Natural killer cell (primary cell): ENCODE measurements at regions of chr5 and their contacts with region 1.

Region 1: DNA sequence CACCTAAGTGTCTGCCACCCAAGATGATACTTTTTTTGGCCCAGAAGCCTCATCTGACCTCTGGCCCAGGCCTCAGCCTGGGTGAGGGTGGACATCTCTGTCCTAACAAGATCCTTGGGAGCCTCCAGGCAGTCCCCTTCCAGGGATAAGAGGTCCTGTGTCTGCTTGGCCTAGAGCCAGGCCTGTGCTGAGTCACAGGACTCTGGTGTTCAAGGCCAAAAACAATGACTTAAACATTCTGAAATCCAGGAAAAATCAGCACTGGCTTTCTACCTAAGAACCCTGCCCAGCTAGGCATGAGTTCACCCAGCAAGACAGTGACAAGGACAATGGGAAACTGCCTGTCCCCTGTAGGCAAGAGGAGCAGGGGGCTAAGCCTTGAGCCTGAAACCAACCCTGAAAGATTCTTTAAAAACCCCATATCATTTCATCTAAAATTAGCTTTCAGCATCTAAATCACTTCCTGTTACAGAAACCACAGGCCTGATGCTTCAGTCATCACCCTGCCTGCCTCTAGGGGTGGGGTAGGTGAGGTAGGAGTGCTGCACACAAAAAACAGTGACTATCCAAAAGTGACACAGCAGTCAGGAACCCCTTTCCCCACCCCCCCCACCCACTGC is 29.9 kb downstream of the CSF2 start:
- DNase-seq: peak; percentile 69 to 85
- ATAC-seq: peak; percentile 65 to 88 (median 75)
- H3K4me3 ChIP-seq: no peak overlapping the region
- H3K4me3 Mint-ChIP-seq: peak overlapping the region; percentile 71
- H3K27ac ChIP-seq: peak overlapping the region; percentile 94
- H3K27ac Mint-ChIP-seq: peak overlapping the region; percentile 92 to 94
- H3K4me1 ChIP-seq: peaks cover 66% of the 10 kb centered on the region
- H3K4me1 Mint-ChIP-seq: peaks cover 71 to 74% of the 10 kb centered on the region in 2 donors
- H3K27me3 ChIP-seq: no peaks in the 10 kb centered on the region
- H3K27me3 Mint-ChIP-seq: no peaks in the 10 kb centered on the region
- CTCF ChIP-seq: no peak

Region 2: GRCh38 chr5:132019857-132020555 is 83.4 kb before region 1 on chr5:
- intact Hi-C with region 1: loop called (anchors 1 kb)
- DNase-seq: peak; percentile 33 to 91
- ATAC-seq: peak; percentile 87 to 94 (median 88)
- H3K4me3 ChIP-seq: no peak overlapping the region
- H3K4me3 Mint-ChIP-seq: peak overlapping the region; percentile 58
- H3K27ac ChIP-seq: peak overlapping the region; percentile 78
- H3K27ac Mint-ChIP-seq: peak overlapping the region; percentile 68 to 79
- H3K4me1 ChIP-seq: peaks cover 41% of the 10 kb centered on the region
- H3K4me1 Mint-ChIP-seq: peaks cover 24 to 29% of the 10 kb centered on the region in 2 donors
- H3K27me3 ChIP-seq: no peaks in the 10 kb centered on the region
- H3K27me3 Mint-ChIP-seq: peaks cover 15 to 16% of the 10 kb centered on the region in 2 donors
- CTCF ChIP-seq: no peak

Region 3: GRCh38 chr5:132027027-132027426 is 76.4 kb before region 1 on chr5:
- intact Hi-C with region 1: loop called (anchors 2 kb)
- DNase-seq: peak in 1 of 2 donors; percentile 23
- ATAC-seq: peak; percentile 30 to 44 (median 43)
- H3K4me3 ChIP-seq: no peak overlapping the region
- H3K4me3 Mint-ChIP-seq: peak overlapping the region; percentile 32
- H3K27ac ChIP-seq: peak overlapping the region; percentile 74
- H3K27ac Mint-ChIP-seq: no peak overlapping the region
- H3K4me1 ChIP-seq: peaks cover 34% of the 10 kb centered on the region
- H3K4me1 Mint-ChIP-seq: peaks cover 5 to 24% of the 10 kb centered on the region in 2 donors
- H3K27me3 ChIP-seq: no peaks in the 10 kb centered on the region
- H3K27me3 Mint-ChIP-seq: peaks cover 9 to 17% of the 10 kb centered on the region in 2 donors
- CTCF ChIP-seq: no peak

Region 4: DNA sequence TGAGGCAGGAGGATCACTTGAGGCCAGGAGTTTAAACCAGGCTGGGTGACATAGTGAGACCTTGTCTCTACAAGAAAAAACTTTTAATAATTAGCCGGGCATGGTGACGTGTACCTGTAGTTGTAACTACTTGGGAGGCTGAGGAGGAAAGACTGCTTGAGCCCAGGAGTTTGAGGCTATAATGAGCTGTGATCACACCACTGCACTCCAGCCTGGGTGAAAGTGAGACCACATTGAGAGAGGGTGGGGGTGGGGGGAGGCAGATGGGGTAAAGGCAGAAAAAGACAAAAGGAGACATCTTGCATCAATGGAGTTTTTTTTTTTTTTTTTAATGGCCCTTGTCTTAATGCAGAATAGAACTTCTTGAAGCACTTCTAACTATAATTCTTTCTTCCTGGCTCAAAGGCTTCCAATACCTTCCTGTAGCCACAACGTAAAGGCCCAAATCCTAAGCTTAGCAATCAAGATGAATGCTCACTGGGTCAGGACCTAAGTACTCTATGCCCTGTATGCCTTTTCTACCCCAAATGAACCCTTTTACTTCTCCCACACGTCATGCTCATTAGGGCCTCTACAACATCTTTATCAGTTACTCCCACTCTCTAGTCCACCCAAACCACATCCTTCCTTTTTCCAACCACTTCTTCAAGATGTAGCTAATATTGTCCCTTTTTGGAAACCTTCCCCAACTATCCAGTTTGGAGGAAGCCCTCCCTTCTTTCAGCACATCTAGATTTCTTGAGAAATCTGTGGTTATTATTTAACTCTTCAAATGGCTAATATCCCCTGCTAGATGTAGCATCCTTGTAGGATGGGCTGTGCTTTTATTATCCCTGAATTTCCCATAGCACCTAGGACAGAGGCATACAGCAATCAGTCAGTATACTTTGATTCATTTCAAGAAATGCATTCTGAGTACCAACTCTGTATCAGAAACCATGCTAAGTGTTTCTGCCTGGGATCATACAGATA is 11.0 kb after region 1 on chr5:
- intact Hi-C with region 1: loop called (anchors 2 kb)
- DNase-seq: no peak
- ATAC-seq: peak; percentile 45 to 65 (median 52)
- H3K4me3 ChIP-seq: no peak overlapping the region
- H3K4me3 Mint-ChIP-seq: peak overlapping the region; percentile 77
- H3K27ac ChIP-seq: no peak overlapping the region
- H3K27ac Mint-ChIP-seq: peak overlapping the region; percentile 83 to 92
- H3K4me1 ChIP-seq: peaks cover 38% of the 10 kb centered on the region
- H3K4me1 Mint-ChIP-seq: peaks cover 58 to 67% of the 10 kb centered on the region in 2 donors
- H3K27me3 ChIP-seq: no peaks in the 10 kb centered on the region
- H3K27me3 Mint-ChIP-seq: no peaks in the 10 kb centered on the region
- CTCF ChIP-seq: no peak

Region 5: DNA sequence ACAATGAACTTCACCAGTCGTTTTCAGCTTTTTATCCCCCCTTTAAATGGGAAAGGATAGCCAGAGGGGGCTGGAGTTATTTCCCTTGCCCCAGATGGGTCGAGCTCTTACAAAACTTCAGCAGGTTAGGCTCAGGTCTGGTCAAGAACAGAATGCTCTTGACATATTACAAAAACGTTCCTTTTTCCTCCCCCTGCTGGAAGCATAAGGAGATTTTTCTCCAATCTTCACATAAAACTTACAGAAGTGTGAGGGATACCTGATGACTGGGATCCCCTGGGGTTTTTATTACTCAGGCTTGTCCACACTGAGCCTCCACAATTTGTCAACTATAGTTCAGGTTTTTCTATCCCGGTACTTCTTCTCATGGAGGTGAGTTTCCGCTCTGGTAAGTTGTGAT is 30.9 kb after region 1 on chr5:
- intact Hi-C with region 1: loop called (anchors 2 kb)
- DNase-seq: peak in 1 of 2 donors; percentile 55
- ATAC-seq: peak in 2 of 3 donors; percentile 38 to 48
- H3K4me3 ChIP-seq: no peak overlapping the region
- H3K4me3 Mint-ChIP-seq: no peak overlapping the region
- H3K27ac ChIP-seq: no peak overlapping the region
- H3K27ac Mint-ChIP-seq: no peak overlapping the region
- H3K4me1 ChIP-seq: no peaks in the 10 kb centered on the region
- H3K4me1 Mint-ChIP-seq: no peaks in the 10 kb centered on the region
- H3K27me3 ChIP-seq: no peaks in the 10 kb centered on the region
- H3K27me3 Mint-ChIP-seq: peaks cover 0 to under 1% of the 10 kb centered on the region in 2 donors
- CTCF ChIP-seq: peak; percentile 42